ENCODE measurements at regions of chr3 and their contacts with region 1.

Region 1: DNA sequence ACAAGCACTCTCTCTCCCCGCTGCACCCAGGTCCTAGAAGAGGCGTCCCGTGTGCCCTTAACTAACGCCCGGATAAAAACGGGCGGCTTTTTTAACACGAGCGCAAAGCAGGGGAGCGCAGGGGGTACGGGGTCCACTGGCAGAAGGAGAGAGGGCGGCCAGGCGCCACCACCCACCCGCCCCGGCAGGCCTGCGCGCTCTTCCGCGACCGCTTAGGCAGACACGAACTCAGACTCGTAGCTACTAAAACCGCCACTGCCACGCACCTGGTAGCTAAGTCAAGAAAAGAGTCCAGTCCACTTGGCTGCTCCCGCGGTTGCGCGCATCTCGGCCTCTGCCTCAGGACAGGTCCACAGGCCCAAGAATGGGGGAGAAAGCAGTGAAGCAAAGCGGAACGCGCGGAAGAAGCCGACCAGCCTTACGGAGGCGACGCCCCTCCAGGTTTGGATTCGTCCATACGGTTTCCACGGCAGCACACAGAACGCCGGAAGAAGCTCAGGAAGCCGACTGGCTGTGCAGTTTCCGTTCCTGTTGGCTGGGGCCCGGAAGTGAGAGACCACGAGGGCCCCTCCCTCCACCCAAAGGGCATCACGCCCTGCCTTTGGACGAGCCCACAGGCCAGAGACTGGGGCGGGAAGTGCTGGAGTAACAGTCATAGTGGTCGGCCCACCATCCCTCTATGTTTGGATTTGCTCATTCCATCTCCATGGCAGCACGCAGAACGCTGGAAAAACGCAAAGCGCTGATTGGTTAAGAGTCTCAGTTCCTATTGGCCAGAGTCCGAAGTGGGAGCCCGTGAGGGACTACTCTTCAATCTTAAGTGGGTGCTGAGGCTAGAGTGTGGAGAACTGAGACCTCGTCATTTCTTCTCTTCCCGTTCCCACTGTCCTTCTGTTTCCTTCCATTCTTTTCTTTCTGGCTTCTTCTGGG is at the start of gene ULK4:
- DNase-seq: peak; percentile 98
- H3K4me3 ChIP-seq: peak within 1 kb of the TSS; percentile 56 to 87 (median 60)
- H3K27ac ChIP-seq: peak within 1 kb of the TSS; percentile 67 to 81 (median 79)
- H3K4me1 ChIP-seq: peaks cover 5 to 6% of the 10 kb centered on the region in 2 donors
- H3K27me3 ChIP-seq: no peaks in the 10 kb centered on the region
- CTCF ChIP-seq: no peak
- POLR2A ChIP-seq: peak in 1 of 2 donors; percentile 75
- total RNA-seq, gene ULK4: 18.7 to 58.2 (median 43.3) TPM

Region 2: GRCh38 chr3:41768363-41768762 is 193.7 kb before region 1 on chr3:
- intact Hi-C with region 1: no loop called
- DNase-seq: no peak
- H3K4me3 ChIP-seq: no peak overlapping the region
- H3K27ac ChIP-seq: no peak overlapping the region
- H3K4me1 ChIP-seq: no peaks in the 10 kb centered on the region
- H3K27me3 ChIP-seq: no peaks in the 10 kb centered on the region
- CTCF ChIP-seq: no peak
- POLR2A ChIP-seq: no peak

Region 3: GRCh38 chr3:42012935-42013690 is 51.1 kb after region 1 on chr3:
- intact Hi-C with region 1: loop called (anchors 10 kb)
- DNase-seq: peak; percentile 72 to 74
- H3K4me3 ChIP-seq: peak overlapping the region in 2 of 3 donors; percentile 88 to 94
- H3K27ac ChIP-seq: peak overlapping the region; percentile 76 to 99 (median 97)
- H3K4me1 ChIP-seq: peaks cover 13 to 24% of the 10 kb centered on the region in 2 donors
- H3K27me3 ChIP-seq: no peaks in the 10 kb centered on the region
- CTCF ChIP-seq: no peak
- POLR2A ChIP-seq: peak in 1 of 2 donors; percentile 72

Region 4: DNA sequence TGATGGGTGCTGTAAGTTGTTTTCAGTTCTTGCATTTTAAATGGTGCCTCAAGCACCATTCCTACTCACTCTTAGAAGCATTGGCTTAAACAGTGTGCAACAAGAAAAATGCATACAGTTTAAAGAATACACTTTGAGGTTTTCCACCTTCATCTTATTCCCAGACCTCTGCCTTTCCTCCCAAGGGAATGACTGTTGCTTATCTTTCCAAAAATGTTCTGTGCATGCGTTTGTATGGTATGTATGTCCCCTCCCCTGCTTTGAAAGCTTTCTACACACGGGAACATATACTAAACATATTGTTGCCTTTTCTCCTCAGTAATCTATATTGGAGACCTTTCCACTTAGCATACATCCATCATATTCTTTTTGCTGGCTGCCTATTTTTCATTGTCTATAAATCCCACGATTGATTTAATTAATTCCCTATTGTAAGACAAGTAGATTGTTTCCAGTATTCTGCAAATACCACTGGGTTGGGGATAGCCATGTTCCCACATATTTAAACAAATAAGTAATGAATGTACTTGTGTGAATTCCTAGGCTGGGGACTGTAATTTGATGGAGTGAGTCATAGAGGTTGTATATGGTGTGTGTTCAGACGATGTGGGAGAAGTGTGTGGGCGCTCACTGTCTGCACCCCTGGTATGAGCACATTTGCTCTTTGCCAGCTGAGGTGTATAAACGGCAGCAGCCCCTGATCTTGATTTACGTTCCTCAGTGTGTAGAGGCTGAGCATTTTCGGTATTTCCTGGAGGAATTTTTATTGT is 135.0 kb after region 1 on chr3:
- intact Hi-C with region 1: loop called (anchors 5 kb)
- DNase-seq: no peak
- H3K4me3 ChIP-seq: no peak overlapping the region
- H3K27ac ChIP-seq: peak overlapping the region in 2 of 3 donors; percentile 14 to 75
- H3K4me1 ChIP-seq: peaks cover 46 to 68% of the 10 kb centered on the region in 2 donors
- H3K27me3 ChIP-seq: no peaks in the 10 kb centered on the region
- CTCF ChIP-seq: no peak
- POLR2A ChIP-seq: no peak

Region 5: GRCh38 chr3:42581709-42582473 is 619.9 kb after region 1 on chr3 and contains the start of gene SEC22C:
- intact Hi-C with region 1: loop called (anchors 10 kb)
- DNase-seq: peak; percentile 97
- H3K4me3 ChIP-seq: peak within 1 kb of the TSS; percentile 63 to 73 (median 67)
- H3K27ac ChIP-seq: peak within 1 kb of the TSS; percentile 75 to 84 (median 82)
- H3K4me1 ChIP-seq: peaks cover 8 to 11% of the 10 kb centered on the region in 2 donors
- H3K27me3 ChIP-seq: no peaks in the 10 kb centered on the region
- CTCF ChIP-seq: peak in 2 of 6 experiments; percentile 13 to 19
- POLR2A ChIP-seq: peak; percentile 5 to 92
- total RNA-seq, gene SEC22C: 59.9 to 66.4 (median 62.7) TPM